WTC11 (cell line): ENCODE measurements at regions of chr3 and their contacts with region 1.

Region 1: GRCh38 chr3:63349583-63350521 is 71.7 kb downstream of the SYNPR start:
- DNase-seq: peak; percentile 49
- ATAC-seq: peak; percentile 56
- H3K4me3 Mint-ChIP-seq: no peak overlapping the region
- H3K27ac Mint-ChIP-seq: no peak overlapping the region
- H3K4me1 Mint-ChIP-seq: peaks cover 13% of the 10 kb centered on the region
- H3K27me3 Mint-ChIP-seq: no peaks in the 10 kb centered on the region
- CTCF ChIP-seq: peak; percentile 65

Region 2: DNA sequence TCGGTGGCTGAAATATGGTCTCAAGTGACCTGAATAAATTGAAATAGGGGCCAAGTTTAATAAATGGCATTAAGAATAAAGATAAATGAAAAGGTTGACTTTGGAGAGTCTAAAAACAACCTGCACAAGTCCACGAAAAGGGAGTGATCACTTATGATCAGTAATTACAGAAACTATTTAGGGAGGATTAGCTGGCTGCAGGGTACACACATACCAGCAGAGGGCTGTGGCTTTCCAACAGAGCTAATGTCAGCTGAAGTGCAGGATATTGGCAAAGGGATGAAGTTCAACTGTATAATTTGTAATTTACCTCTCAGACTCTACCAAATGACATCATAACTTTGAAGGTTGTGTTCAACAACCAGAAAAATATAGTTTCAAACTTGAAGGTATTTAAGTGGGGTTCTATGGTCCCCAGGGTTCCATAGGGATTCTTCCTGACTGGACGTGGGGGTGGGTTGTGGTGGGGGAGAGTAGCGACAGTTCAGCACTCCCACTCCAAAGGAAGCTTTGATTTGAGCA is 15.1 kb after region 1 on chr3:
- CTCF ChIA-PET with region 1: interaction called, 19 read pairs
- POLR2A ChIA-PET with region 1: no interaction called
- DNase-seq: peak; percentile 30
- ATAC-seq: peak; percentile 84
- H3K4me3 Mint-ChIP-seq: no peak overlapping the region
- H3K27ac Mint-ChIP-seq: no peak overlapping the region
- H3K4me1 Mint-ChIP-seq: peaks cover 5% of the 10 kb centered on the region; the same call in 1 of the 2 replicates
- H3K27me3 Mint-ChIP-seq: no peaks in the 10 kb centered on the region
- CTCF ChIP-seq: peak; percentile 52; the same call in 1 of the 2 replicates

Region 3: GRCh38 chr3:63528325-63529000 is 178.6 kb after region 1 on chr3:
- CTCF ChIA-PET with region 1: no interaction called
- POLR2A ChIA-PET with region 1: no interaction called
- DNase-seq: no peak
- ATAC-seq: no peak
- H3K4me3 Mint-ChIP-seq: no peak overlapping the region
- H3K27ac Mint-ChIP-seq: no peak overlapping the region
- H3K4me1 Mint-ChIP-seq: peaks cover 27% of the 10 kb centered on the region
- H3K27me3 Mint-ChIP-seq: no peaks in the 10 kb centered on the region
- CTCF ChIP-seq: no peak

Region 4: DNA sequence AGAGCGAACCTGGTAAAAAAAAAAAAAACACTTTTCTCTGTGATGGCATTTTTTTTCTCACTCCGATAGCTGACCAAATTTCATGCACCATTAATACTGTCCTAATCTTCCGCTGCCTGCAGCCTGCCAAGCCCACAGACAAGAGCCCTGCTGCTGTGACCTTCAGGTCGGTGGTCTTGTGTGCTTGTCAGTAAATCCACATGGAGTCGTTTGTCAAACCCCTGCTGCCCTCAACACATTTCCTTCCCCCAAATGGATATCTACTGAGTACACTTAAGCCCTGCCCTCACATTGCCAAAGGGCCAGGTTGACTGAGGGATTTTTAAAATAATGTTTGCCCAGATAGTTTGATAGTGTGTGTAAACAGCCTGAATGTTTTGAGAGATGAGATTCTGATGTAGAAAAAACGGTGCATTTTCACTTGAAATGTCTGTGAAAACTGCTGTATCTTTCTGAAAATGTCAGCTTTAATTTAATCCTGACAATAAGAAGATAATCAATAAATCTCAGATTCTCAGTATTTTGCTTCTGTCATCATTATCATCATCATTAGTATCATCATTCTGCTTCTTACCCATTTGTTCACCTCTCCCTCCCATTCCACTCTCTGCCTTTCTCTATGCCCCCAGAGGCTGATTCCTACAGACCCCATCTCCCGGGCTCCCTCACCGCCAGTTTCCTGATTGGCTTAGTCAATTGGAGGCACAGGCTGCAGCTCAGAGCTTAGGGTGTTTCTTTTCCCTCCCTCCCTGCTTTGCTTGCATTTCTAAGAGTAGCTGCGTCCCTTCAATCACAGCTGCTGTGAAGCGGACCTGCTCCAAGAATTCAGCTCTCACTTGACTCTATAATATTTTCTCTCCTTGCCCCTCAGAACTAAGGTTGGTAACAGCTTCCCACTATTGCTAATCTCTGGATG is 294.3 kb after region 1 on chr3:
- CTCF ChIA-PET with region 1: interaction called, 15 read pairs
- POLR2A ChIA-PET with region 1: no interaction called
- DNase-seq: peak; percentile 38
- ATAC-seq: peak; percentile 96
- H3K4me3 Mint-ChIP-seq: peak overlapping the region; percentile 88
- H3K27ac Mint-ChIP-seq: peak overlapping the region; percentile 15
- H3K4me1 Mint-ChIP-seq: peaks cover 17% of the 10 kb centered on the region
- H3K27me3 Mint-ChIP-seq: peaks cover 22% of the 10 kb centered on the region
- CTCF ChIP-seq: no peak

Region 5: DNA sequence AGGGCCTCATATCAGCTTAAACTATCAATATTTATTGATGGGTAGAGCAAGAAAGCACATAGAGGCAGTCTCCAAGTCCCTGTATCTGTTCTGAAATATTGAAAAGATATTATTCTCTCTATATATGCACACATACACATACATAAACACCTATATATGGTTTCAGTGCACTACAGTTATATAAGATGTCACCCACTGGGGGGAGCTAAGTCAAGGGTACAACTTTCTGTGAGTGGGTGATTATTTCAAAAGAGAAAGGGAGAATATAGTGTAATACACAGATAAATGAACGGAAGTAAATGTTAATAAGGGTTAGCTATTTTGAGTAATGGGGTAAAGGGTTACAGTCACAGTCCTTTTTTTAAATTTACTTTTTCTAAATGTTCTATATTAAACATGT is 311.4 kb after region 1 on chr3:
- CTCF ChIA-PET with region 1: interaction called, 57 read pairs
- POLR2A ChIA-PET with region 1: no interaction called
- DNase-seq: no peak
- ATAC-seq: no peak
- H3K4me3 Mint-ChIP-seq: no peak overlapping the region
- H3K27ac Mint-ChIP-seq: no peak overlapping the region
- H3K4me1 Mint-ChIP-seq: peaks cover 9% of the 10 kb centered on the region
- H3K27me3 Mint-ChIP-seq: no peaks in the 10 kb centered on the region
- CTCF ChIP-seq: no peak

Region 6: DNA sequence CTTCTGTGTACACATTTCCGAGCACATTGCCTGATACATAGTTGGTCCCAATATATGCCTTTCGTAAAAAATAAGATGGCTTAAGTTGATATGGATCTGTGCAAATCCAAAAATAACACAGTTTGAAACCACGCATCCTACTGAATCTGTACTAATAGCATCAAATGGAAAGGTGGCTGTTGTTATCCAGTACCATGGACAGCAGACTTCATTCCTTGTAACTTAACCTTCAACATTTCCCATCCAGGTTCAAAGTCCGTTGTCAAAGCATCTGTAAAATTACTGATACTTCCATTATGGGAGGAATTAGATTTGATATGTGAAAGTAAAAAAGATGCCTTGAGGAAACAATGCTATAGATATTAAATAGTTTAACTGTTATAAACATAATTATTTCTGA is 403.7 kb after region 1 on chr3:
- CTCF ChIA-PET with region 1: no interaction called
- POLR2A ChIA-PET with region 1: no interaction called
- DNase-seq: no peak
- ATAC-seq: no peak
- H3K4me3 Mint-ChIP-seq: no peak overlapping the region
- H3K27ac Mint-ChIP-seq: no peak overlapping the region
- H3K4me1 Mint-ChIP-seq: peaks cover 7% of the 10 kb centered on the region
- H3K27me3 Mint-ChIP-seq: no peaks in the 10 kb centered on the region; the same call in 1 of the 2 replicates
- CTCF ChIP-seq: no peak

Region 7: GRCh38 chr3:63818281-63819150 is 468.7 kb after region 1 on chr3:
- CTCF ChIA-PET with region 1: interaction called, 37 read pairs
- POLR2A ChIA-PET with region 1: no interaction called
- DNase-seq: peak; percentile 72
- ATAC-seq: peak; percentile 64
- H3K4me3 Mint-ChIP-seq: no peak overlapping the region
- H3K27ac Mint-ChIP-seq: no peak overlapping the region
- H3K4me1 Mint-ChIP-seq: peaks cover 13% of the 10 kb centered on the region
- H3K27me3 Mint-ChIP-seq: no peaks in the 10 kb centered on the region
- CTCF ChIP-seq: peak; percentile 87